ENCODE measurements at regions of chr4 and their contacts with region 1.

Region 1: DNA sequence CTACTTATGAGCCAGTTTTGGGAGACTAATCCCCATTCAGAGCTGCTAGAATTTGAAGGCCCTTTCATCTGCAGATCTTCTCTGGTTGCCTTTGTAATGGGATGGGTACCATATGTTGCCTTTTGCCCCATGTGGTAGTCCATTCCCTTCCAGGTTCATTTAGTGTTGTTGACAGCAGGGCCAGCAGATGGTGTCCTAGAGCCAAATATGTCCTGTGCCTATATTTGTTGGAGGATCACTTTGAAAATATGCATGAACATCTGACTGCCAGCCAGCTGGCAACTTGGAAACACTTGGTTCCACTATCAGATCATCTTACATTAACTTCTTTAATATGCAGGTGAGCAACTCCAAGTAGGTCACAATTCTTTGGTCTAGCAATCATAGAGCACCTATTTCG is 30.4 kb downstream of the CFAP299 start:
- DNase-seq: no peak
- H3K4me3 Mint-ChIP-seq: no peak overlapping the region
- H3K27ac Mint-ChIP-seq: no peak overlapping the region
- H3K4me1 Mint-ChIP-seq: no peaks in the 10 kb centered on the region
- H3K27me3 Mint-ChIP-seq: peaks cover 3% of the 10 kb centered on the region

Region 2: GRCh38 chr4:80989921-80990544 is 624.1 kb after region 1 on chr4:
- intact Hi-C with region 1: loop called (anchors 1 kb)
- DNase-seq: no peak
- H3K4me3 Mint-ChIP-seq: no peak overlapping the region
- H3K27ac Mint-ChIP-seq: no peak overlapping the region
- H3K4me1 Mint-ChIP-seq: no peaks in the 10 kb centered on the region
- H3K27me3 Mint-ChIP-seq: peaks cover 2% of the 10 kb centered on the region

Region 3: DNA sequence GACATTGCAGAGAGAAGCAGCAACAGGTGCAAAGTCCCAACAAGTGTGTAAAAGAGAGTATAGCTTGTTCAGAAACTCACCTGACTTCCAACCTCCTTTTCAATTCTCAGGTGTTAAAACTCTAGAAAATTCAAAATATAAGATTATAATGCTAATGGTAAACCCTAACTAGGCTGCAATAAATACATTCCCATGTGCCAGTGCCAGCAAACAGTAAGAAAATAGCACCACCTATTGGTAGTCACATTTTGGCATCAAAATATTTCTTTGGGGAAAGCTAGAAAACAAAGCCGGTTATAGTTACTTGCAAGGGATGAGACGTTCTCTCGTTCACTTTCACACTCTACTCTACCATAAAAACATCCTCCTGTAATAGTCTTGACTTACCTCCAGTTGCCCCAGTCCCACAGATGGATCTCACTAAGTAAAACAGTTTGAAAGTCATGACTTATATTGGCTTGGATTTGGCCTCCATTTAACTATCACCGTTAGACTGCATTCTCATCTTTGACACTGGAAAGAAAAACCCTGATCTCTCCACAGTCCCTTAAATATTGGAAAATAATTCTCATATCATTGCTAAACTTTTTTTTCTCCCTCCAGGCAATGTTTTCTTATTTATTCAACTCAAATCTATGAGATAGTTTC is 674.2 kb after region 1 on chr4:
- intact Hi-C with region 1: loop called (anchors 5 kb)
- DNase-seq: no peak
- H3K4me3 Mint-ChIP-seq: no peak overlapping the region
- H3K27ac Mint-ChIP-seq: no peak overlapping the region
- H3K4me1 Mint-ChIP-seq: no peaks in the 10 kb centered on the region
- H3K27me3 Mint-ChIP-seq: peaks cover 14% of the 10 kb centered on the region